Breast epithelium (tissue), 4 donors: ENCODE measurements at regions of chr11 and their contacts with region 1.

Region 1: DNA sequence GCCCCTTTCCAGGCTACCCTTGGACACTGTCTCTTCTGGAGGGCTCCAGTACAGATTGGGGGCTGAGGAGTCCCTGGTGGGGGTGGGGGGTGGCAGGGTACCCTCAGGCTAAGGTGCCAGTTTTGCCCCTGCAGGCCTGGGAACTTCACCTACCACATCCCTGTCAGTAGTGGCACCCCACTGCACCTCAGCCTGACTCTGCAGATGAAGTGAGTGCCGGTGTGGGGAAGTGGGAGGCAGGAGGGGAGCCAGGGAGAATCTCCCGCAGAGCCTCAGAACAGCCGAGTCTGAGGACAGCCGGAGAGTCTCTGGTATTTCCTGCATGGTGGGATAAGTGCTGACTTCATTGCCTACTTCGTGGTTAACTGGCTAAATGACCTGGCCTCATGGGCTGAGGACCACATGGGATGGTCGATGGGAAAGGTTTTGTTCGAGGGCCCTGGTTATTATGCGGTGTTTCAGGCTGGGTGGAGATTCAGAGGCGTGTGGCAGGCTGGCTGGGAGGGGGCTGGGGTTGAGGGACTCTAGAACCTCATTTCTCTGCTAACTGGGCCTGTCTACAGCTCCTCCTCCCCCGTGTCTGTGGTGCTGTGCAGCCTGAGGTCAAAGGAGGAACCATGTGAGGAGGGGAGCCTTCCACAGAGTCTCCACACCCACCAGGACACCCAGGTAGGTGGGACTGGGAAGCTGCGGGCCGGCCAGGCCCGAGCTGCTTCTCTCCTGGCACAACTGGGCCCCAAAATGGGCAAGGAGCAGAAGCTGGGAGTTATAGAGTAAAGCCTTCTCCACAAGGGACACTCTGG is 8.5 kb downstream of the TMEM258 start:
- DNase-seq: no peak
- H3K4me3 ChIP-seq: no peak overlapping the region
- H3K27ac ChIP-seq: no peak overlapping the region
- H3K4me1 ChIP-seq: no peaks in the 10 kb centered on the region
- H3K27me3 ChIP-seq: no peaks in the 10 kb centered on the region
- CTCF ChIP-seq: no peak
- POLR2A ChIP-seq: no peak

Region 2: DNA sequence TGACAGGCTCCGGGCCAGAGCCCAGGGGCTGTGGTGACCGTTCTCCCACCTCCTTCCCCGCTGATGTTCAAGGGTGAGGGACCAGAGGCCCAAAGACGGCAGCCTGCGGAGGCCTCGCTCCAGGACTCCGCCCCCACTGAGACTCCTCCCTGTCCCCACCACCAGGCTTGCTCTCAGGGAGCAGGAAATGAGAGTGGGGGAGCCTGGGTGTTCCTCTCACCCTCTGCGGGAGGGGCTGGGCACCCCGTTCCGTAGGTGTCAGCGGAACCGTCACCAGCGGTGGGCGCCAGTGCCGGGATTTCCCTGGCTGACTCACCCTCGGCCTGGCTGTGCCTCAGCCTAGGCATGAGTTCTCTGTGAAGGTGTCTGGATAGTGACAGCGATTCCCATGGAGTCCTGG is 88.0 kb before region 1 on chr11:
- intact Hi-C with region 1: no loop called
- DNase-seq: peak; percentile 87 to 95
- H3K4me3 ChIP-seq: peak overlapping the region; percentile 25 to 62 (median 40)
- H3K27ac ChIP-seq: peak overlapping the region; percentile 99 to 100
- H3K4me1 ChIP-seq: peaks cover 22 to 85% of the 10 kb centered on the region in 2 donors
- H3K27me3 ChIP-seq: no peaks in the 10 kb centered on the region
- CTCF ChIP-seq: peak; percentile 23 to 25 (median 23)
- POLR2A ChIP-seq: no peak

Region 3: GRCh38 chr11:61728940-61729219 is 55.0 kb before region 1 on chr11:
- intact Hi-C with region 1: no loop called
- DNase-seq: no peak
- H3K4me3 ChIP-seq: no peak overlapping the region
- H3K27ac ChIP-seq: no peak overlapping the region
- H3K4me1 ChIP-seq: peaks cover 0 to 11% of the 10 kb centered on the region in 2 donors
- H3K27me3 ChIP-seq: no peaks in the 10 kb centered on the region
- CTCF ChIP-seq: no peak
- POLR2A ChIP-seq: no peak

Region 4: DNA sequence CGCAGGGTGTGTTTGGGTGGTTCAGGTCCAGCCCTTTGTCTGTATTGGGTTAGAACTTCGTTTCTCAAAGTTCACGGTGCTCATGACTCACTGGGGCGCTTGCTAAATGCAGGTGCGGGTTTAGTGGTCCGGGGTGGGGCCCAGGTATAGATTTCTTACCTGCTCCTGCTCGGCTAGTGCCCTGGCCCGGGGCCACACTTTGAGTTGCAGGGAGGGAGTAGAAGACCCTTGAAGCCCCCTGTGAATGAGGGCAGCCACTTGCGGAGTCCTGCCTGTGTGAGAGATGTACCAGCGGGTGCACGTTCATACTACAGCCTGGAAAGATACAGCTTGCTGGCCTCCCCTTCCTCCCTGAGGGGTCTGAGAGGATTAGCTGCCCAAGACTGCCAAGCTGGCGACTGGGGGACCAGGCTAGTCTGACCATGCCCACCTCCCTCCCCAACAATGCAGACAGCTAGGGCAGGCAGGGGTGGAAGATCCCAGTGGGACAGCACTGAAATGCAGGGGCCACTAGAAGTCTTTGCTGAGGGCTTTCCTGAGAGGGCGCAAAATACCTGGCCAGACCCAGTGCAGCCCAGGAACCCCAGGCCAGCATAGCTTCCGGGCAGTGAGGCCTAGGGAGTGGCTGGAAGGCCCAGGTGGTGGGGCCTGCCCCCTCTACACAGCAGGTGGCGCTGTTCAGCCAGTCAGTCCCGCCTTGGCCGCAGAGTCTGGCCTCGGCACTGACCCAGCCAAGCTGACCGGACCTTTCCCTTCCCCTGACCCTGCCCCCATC is 36.5 kb before region 1 on chr11:
- intact Hi-C with region 1: no loop called
- DNase-seq: peak in 1 of 2 donors; percentile 75
- H3K4me3 ChIP-seq: no peak overlapping the region
- H3K27ac ChIP-seq: no peak overlapping the region
- H3K4me1 ChIP-seq: no peaks in the 10 kb centered on the region
- H3K27me3 ChIP-seq: no peaks in the 10 kb centered on the region
- CTCF ChIP-seq: peak in 2 of 3 donors; percentile 65 to 85
- POLR2A ChIP-seq: no peak

Region 5: DNA sequence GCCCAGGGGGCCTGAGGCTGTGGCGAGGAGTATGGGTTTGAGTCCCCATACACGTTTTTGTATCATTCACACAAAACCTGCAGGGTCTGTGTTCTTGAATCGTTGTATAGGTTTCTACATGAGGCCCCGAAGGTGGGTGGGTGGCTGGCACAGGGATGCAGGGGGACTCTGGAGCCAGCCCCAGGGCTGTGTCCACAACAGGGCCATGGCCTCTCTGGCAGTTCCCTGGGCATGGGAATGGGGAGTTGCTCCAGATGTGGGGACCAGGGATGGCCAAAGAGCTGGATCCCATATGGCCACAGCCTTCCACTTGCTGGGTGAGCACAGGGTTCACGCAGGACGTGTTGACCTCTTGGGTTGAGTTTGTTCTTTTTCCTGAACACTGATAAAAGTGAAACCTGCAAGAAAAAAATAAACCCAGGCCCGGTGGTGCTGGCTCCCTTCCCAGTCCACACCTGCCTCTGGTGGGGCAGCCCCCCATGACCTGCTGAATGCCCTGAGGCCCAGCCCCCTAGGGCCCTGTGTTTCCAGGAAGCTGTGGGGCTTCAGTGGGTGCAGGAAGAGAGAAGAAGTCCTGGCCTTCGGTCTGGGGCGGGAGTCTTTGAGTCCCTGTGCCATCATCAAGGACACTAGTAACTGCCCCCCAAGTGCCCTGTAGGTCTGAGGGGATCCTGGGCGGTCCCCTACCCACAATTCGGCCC is 15.4 kb before region 1 on chr11:
- intact Hi-C with region 1: loop called (anchors 1 kb)
- DNase-seq: no peak
- H3K4me3 ChIP-seq: no peak overlapping the region
- H3K27ac ChIP-seq: no peak overlapping the region
- H3K4me1 ChIP-seq: no peaks in the 10 kb centered on the region
- H3K27me3 ChIP-seq: no peaks in the 10 kb centered on the region
- CTCF ChIP-seq: no peak
- POLR2A ChIP-seq: no peak

Region 6: DNA sequence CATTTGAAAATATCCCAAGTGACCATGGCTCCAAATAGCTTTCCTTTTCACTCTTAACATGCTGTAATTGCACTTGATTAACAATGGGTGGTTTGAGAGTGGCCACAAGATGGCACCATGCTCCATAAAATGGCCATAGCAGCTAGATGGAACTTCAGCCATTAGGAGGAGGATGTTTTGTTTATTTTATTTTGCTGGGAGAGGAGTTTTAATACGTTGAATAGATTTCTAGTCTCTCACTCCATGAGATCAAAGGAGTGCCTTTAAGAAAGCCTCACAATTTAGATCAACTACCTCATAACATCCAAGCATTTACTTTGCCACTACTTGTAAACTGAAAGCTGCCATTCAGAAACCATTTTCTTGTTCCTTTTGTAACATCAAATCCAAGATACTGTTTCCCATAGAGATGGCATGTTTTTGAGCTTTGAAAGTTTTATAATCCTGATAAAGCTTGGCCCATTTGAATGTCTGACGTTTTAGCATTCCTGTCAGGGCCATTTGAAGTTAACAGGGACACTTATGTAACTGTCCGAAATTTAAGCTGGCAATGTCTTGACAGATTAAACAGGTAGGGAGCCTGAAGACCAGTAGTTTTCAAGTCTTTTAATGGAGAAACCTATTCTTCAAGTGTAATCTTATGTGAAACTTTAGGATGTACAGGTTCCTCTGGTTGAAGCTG is 13.5 kb after region 1 on chr11:
- intact Hi-C with region 1: no loop called
- DNase-seq: peak; percentile 71 to 79
- H3K4me3 ChIP-seq: no peak overlapping the region
- H3K27ac ChIP-seq: peak overlapping the region; percentile 2 to 8
- H3K4me1 ChIP-seq: no peaks in the 10 kb centered on the region
- H3K27me3 ChIP-seq: no peaks in the 10 kb centered on the region
- CTCF ChIP-seq: peak; percentile 57 to 88 (median 86)
- POLR2A ChIP-seq: no peak